Left cardiac atrium (tissue), 4 donors: ENCODE measurements at regions of chr4 and their contacts with region 1.

Region 1: GRCh38 chr4:152850377-152850776 is 70.6 kb downstream of the ARFIP1 start:
- DNase-seq: no peak
- ATAC-seq: peak; percentile 68 to 72

Region 2: DNA sequence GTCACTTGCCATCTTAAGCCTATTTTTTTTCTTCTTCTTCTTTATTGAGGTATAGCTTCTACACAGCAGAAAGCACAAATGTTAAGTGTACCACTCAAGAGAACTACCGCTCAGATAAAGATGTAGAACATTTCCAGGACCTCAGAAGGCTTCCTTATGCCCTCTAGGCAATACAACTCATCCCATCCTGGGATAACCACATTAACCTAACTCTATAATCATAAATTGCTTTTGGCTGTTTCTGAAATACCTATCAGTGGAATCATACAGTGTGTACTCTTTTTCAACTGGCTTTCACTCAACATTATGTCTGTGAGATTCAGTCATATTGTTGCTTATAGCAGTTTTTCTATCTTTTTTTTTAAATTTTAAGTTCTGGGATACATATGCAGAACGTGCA is 19.0 kb before region 1 on chr4:
- intact Hi-C with region 1: no loop called
- DNase-seq: no peak
- ATAC-seq: no peak

Region 3: DNA sequence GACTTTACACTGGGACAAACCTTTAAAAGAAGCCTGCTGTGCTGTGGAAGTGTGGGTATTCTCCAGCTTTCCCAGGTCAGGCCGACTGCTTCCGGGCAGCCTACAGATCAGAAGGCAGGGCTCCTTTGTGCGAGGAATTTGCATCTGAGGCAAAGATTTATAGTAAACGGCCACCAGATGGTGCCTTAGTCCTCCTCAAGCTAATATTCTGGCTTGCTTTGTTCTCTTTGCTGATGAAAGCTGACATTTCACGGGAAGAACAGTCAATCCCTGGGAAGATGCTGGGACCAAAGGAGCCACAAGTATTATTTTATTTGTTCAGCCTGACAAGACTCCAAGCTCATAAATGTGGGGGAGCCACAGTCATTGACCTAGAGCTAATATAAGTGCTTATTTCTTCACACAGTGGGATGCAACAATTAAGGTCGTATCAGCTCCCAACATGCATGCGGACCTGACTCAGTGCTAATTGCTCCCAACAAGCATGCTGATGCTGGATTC is 233.1 kb after region 1 on chr4:
- intact Hi-C with region 1: loop called (anchors 1 to 5 kb)
- DNase-seq: peak; percentile 49
- ATAC-seq: peak; percentile 70 to 86